A549 (cell line): ENCODE measurements at regions of chr1 and their contacts with region 1.

Region 1: DNA sequence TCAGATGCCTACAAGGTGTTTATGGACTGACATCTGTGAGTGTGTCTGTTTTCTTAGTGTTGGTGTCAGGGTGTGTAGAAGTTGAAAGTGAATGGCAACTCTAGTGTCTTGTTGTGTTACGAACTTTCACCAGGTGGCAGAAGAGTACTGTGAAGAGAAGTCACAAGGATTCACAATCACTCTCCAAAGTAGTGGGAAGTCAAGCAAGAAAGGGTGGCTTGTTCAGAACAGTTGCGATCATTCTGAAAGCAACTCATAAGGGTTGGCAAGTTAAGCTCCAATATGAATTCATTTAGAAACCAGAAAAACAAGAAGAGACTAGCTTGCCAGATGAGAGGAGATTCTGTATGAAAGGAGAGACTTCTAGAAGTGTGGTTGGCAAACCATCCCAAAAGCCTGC is 86.1 kb downstream of the FASLG start:
- DNase-seq: peak; percentile 30 to 79
- ATAC-seq: peak; percentile 80 to 88
- H3K4me3 ChIP-seq: no peak overlapping the region
- H3K27ac ChIP-seq: peak overlapping the region in 1 of 2 experiments; percentile 72; a peak in 1 of 6 replicates
- H3K4me1 ChIP-seq: peaks cover 23% of the 10 kb centered on the region
- CTCF ChIP-seq: peak; percentile 87
- EP300 ChIP-seq: no peak
- POLR2A ChIP-seq: no peak
- RAD21 ChIP-seq: peak; percentile 94 to 95

Region 2: GRCh38 chr1:172630056-172630818 is 114.8 kb before region 1 on chr1:
- CTCF ChIA-PET with region 1: no interaction called
- POLR2A ChIA-PET with region 1: no interaction called
- DNase-seq: peak in 1 of 2 experiments; percentile 54
- ATAC-seq: peak; percentile 74 to 78
- H3K4me3 ChIP-seq: 0 out of 3 replicates have a peak overlapping the region, but pooled peaks have one; percentile 2
- H3K27ac ChIP-seq: peak overlapping the region; percentile 76 to 83
- H3K4me1 ChIP-seq: peaks cover 26% of the 10 kb centered on the region
- CTCF ChIP-seq: no peak
- EP300 ChIP-seq: no peak
- POLR2A ChIP-seq: no peak
- RAD21 ChIP-seq: no peak

Region 3: GRCh38 chr1:172764378-172764777 is 19.4 kb after region 1 on chr1:
- CTCF ChIA-PET with region 1: interaction called, 13 read pairs
- POLR2A ChIA-PET with region 1: no interaction called
- DNase-seq: no peak
- ATAC-seq: no peak
- H3K4me3 ChIP-seq: no peak overlapping the region
- H3K27ac ChIP-seq: no peak overlapping the region
- H3K4me1 ChIP-seq: peaks cover 3% of the 10 kb centered on the region; the same call in 1 of the 3 replicates
- CTCF ChIP-seq: no peak
- EP300 ChIP-seq: no peak
- POLR2A ChIP-seq: no peak
- RAD21 ChIP-seq: no peak

Region 4: GRCh38 chr1:173202430-173203145 is 457.6 kb after region 1 on chr1:
- CTCF ChIA-PET with region 1: interaction called, 212 read pairs
- POLR2A ChIA-PET with region 1: no interaction called
- DNase-seq: peak; percentile 15 to 70
- ATAC-seq: peak; percentile 90
- H3K4me3 ChIP-seq: no peak overlapping the region
- H3K27ac ChIP-seq: peak overlapping the region; percentile 40 to 50; a peak in 2 of 6 replicates
- H3K4me1 ChIP-seq: peaks cover 2% of the 10 kb centered on the region; the same call in 1 of the 3 replicates
- CTCF ChIP-seq: peak; percentile 83
- EP300 ChIP-seq: no peak
- POLR2A ChIP-seq: no peak
- RAD21 ChIP-seq: peak; percentile 96

Region 5: DNA sequence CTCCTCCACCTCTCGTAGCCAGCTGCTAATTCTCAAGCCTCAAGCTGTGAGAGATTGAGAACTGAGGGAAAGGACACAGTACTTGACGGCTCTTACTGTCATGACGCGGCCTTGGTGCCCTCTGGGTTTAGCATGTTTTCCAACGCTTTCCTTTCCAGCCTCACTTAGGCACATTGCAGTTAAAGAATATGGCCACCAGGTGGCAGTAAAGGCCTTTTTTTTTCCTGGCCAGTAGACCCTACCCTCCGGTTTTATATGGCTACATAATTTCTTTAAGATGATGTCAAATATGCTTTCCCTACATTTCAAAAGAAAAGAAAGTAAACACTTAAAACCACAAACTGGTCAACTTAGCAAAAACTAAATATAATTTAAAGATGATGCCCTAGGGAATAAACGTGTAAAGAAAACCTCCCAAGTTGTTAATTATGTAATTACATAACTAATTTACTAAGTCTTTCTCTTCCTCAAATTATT is 675.4 kb after region 1 on chr1:
- CTCF ChIA-PET with region 1: interaction called, 59 read pairs
- POLR2A ChIA-PET with region 1: no interaction called
- DNase-seq: peak; percentile 31 to 81
- ATAC-seq: peak; percentile 90 to 98
- H3K4me3 ChIP-seq: no peak overlapping the region
- H3K27ac ChIP-seq: peak overlapping the region; percentile 7 to 31; a peak in 3 of 6 replicates
- H3K4me1 ChIP-seq: peaks cover 10% of the 10 kb centered on the region; the same call in 2 of the 3 replicates
- CTCF ChIP-seq: peak; percentile 89
- EP300 ChIP-seq: no peak
- POLR2A ChIP-seq: no peak
- RAD21 ChIP-seq: peak; percentile 90 to 94

Region 6: GRCh38 chr1:173824331-173825081 is 1079.5 kb after region 1 on chr1 and contains the starts of genes CENPL and DARS2:
- CTCF ChIA-PET with region 1: interaction called, 48 read pairs
- POLR2A ChIA-PET with region 1: interaction called, 3 read pairs
- DNase-seq: peak; percentile 91 to 98
- ATAC-seq: peak; percentile 96
- H3K4me3 ChIP-seq: peak within 1 kb of the TSS; percentile 74
- H3K27ac ChIP-seq: peak within 1 kb of the TSS; percentile 90 to 92
- H3K4me1 ChIP-seq: peaks cover 16% of the 10 kb centered on the region; the same call in 1 of the 3 replicates
- CTCF ChIP-seq: no peak
- EP300 ChIP-seq: no peak
- POLR2A ChIP-seq: peak; percentile 51
- RAD21 ChIP-seq: no peak
- polyA plus RNA-seq, gene CENPL: 15.6 and 20.2 TPM in 2 replicates
- polyA plus RNA-seq, gene DARS2: 67.0 and 70.4 TPM in 2 replicates